B cell (primary cell): ENCODE measurements at regions of chr1 and their contacts with region 1.

Region 1: DNA sequence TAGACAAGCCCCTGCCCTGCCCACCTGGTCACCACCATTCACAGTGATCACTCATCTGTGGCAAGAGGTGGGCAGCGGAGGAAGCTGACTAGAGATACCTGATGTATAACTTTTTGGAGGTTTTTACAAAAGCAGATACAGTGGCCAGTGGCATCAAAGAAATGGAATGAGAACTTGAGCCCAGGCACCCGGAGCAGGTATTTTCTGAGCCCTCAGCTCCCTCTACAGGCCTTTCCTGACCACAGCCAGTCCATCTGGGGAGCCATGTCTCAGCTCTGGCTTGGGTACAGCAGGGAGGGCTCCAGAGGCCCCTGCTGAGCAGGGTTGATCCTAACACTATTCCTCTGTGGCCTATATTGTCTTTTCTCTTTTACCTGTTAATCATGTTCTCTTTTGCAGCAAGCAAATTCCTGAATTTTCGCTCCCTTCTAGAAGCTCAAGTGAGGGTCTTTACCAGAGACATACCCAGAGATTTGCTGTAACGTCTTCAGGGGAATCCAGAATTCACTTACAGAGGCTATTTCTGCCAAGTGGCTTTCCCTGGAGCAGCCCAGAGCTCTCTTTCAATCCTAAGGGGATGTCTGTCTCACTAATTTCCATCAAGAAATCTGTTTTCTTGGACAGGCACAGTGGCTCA is 27.3 kb downstream of the GPR157 start:
- DNase-seq: peak; percentile 72
- ATAC-seq: peak; percentile 93
- H3K4me3 ChIP-seq: no peak overlapping the region
- H3K4me3 Mint-ChIP-seq: no peak overlapping the region
- H3K27ac ChIP-seq: no peak overlapping the region
- H3K27ac Mint-ChIP-seq: no peak overlapping the region
- H3K4me1 ChIP-seq: no peaks in the 10 kb centered on the region
- H3K4me1 Mint-ChIP-seq: no peaks in the 10 kb centered on the region
- H3K27me3 ChIP-seq: no peaks in the 10 kb centered on the region
- H3K27me3 Mint-ChIP-seq: no peaks in the 10 kb centered on the region
- CTCF ChIP-seq: peak; percentile 78

Region 2: GRCh38 chr1:8913111-8913856 is 188.3 kb before region 1 on chr1:
- CTCF ChIA-PET with region 1: interaction called, 15 read pairs
- POLR2A ChIA-PET with region 1: no interaction called
- intact Hi-C with region 1: no loop called
- DNase-seq: no peak
- ATAC-seq: no peak
- H3K4me3 ChIP-seq: no peak overlapping the region
- H3K4me3 Mint-ChIP-seq: no peak overlapping the region
- H3K27ac ChIP-seq: no peak overlapping the region
- H3K27ac Mint-ChIP-seq: no peak overlapping the region
- H3K4me1 ChIP-seq: no peaks in the 10 kb centered on the region
- H3K4me1 Mint-ChIP-seq: no peaks in the 10 kb centered on the region
- H3K27me3 ChIP-seq: peaks cover 0 to 5% (median 0%) of the 10 kb centered on the region in 4 experiments
- H3K27me3 Mint-ChIP-seq: peaks cover 19% of the 10 kb centered on the region
- CTCF ChIP-seq: no peak

Region 3: DNA sequence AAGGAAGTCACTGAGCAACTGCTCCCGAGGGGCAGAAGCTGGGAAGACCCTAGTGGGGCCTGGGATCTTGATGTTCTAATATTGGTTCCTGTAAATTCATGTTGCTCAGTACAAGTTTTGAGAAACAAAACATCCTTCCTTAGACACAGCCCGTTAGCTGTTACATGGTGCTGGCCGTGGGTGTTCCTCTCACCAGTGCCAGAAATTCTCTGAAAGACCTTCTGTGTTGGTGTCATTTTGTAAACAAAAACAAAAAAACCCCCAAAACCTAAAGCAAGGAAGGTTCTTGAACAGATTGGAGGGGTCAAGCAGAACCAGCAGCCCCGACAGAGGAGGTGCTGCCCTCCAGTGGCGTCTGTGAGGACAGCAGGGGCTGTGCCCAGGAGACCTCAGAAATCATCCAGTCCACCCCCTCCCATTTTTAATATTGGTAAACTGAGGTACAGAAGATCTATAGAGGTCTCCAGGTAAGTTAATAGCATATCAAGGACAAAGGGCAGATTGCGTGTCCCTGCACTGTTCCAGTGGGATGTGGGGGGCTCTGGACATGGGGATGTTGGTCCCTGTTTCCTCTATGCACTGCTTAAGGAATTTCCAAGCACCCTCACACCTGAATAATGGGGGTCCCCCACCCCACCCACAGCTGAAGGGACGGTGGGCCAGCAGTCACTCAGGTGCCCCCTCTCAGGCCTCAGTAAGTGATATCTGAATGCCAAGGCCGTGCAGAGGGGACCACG is 113.6 kb before region 1 on chr1:
- CTCF ChIA-PET with region 1: interaction called, 15 read pairs
- POLR2A ChIA-PET with region 1: no interaction called
- intact Hi-C with region 1: loop called (anchors 2 kb)
- DNase-seq: peak; percentile 66
- ATAC-seq: peak; percentile 92
- H3K4me3 ChIP-seq: no peak overlapping the region
- H3K4me3 Mint-ChIP-seq: peak overlapping the region; percentile 15
- H3K27ac ChIP-seq: no peak overlapping the region
- H3K27ac Mint-ChIP-seq: no peak overlapping the region
- H3K4me1 ChIP-seq: peaks cover 5 to 15% of the 10 kb centered on the region in 2 donors
- H3K4me1 Mint-ChIP-seq: peaks cover 9% of the 10 kb centered on the region
- H3K27me3 ChIP-seq: peaks cover 0 to 4% (median 0%) of the 10 kb centered on the region in 4 experiments
- H3K27me3 Mint-ChIP-seq: peaks cover 19% of the 10 kb centered on the region
- CTCF ChIP-seq: peak; percentile 97

Region 4: GRCh38 chr1:9014475-9015375 is 86.9 kb before region 1 on chr1:
- CTCF ChIA-PET with region 1: interaction called, 95 read pairs
- POLR2A ChIA-PET with region 1: no interaction called
- intact Hi-C with region 1: loop called (anchors 1 kb)
- DNase-seq: no peak
- ATAC-seq: no peak
- H3K4me3 ChIP-seq: no peak overlapping the region
- H3K4me3 Mint-ChIP-seq: no peak overlapping the region
- H3K27ac ChIP-seq: no peak overlapping the region
- H3K27ac Mint-ChIP-seq: no peak overlapping the region
- H3K4me1 ChIP-seq: peaks cover 25 to 31% of the 10 kb centered on the region in 2 donors
- H3K4me1 Mint-ChIP-seq: peaks cover 34% of the 10 kb centered on the region
- H3K27me3 ChIP-seq: no peaks in the 10 kb centered on the region
- H3K27me3 Mint-ChIP-seq: peaks cover 6% of the 10 kb centered on the region
- CTCF ChIP-seq: no peak

Region 5: DNA sequence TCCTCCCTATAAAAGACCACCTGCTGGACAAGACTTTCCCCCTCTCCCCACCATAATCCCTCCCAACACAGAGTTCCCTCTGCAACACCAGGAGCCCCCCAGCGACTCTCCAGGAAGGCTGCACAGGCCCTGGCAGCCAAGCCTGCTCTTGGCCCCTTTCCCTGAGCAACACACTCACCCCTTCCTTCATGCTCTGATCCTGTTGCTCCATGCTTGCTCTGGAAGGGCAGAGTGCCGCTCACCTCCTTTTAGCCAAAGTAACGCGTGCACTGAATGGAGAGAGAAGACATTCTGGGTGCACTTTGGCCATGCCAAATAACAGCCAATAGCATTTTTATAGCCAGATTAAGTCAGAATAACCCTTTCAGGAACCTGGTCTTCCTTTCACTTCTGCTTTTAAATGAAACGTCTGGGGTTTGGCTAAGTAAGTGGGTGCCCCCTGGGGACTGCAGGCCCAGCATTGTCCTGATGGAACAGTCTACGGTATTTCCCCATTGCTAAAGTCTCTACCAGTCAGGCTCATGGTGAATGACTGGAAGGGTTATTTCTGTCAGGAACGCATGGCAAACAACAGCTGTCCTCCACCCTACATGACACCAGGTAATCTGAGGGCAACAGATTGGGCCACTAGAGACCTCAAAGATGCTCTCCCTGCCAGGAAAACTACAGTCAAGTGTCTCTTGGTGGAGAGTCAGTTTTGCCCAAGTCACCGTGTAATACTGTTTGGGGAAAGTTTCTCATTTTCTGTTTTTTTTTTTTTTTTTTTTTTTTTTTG is 32.1 kb before region 1 on chr1 and contains the start of gene SLC2A5:
- CTCF ChIA-PET with region 1: interaction called, 9 read pairs
- POLR2A ChIA-PET with region 1: no interaction called
- intact Hi-C with region 1: loop called (anchors 1 kb)
- DNase-seq: peak; percentile 89
- ATAC-seq: peak; percentile 98
- H3K4me3 ChIP-seq: peak within 1 kb of the TSS; percentile 22 to 70 (median 65)
- H3K4me3 Mint-ChIP-seq: peak within 1 kb of the TSS; percentile 95
- H3K27ac ChIP-seq: peak within 1 kb of the TSS; percentile 71 to 78
- H3K27ac Mint-ChIP-seq: peak within 1 kb of the TSS; percentile 84
- H3K4me1 ChIP-seq: peaks cover 49 to 58% of the 10 kb centered on the region in 2 donors
- H3K4me1 Mint-ChIP-seq: peaks cover 69% of the 10 kb centered on the region
- H3K27me3 ChIP-seq: no peaks in the 10 kb centered on the region
- H3K27me3 Mint-ChIP-seq: no peaks in the 10 kb centered on the region
- CTCF ChIP-seq: no peak
- total RNA-seq, gene SLC2A5: 28.8 and 29.5 TPM in 2 replicates

Region 6: DNA sequence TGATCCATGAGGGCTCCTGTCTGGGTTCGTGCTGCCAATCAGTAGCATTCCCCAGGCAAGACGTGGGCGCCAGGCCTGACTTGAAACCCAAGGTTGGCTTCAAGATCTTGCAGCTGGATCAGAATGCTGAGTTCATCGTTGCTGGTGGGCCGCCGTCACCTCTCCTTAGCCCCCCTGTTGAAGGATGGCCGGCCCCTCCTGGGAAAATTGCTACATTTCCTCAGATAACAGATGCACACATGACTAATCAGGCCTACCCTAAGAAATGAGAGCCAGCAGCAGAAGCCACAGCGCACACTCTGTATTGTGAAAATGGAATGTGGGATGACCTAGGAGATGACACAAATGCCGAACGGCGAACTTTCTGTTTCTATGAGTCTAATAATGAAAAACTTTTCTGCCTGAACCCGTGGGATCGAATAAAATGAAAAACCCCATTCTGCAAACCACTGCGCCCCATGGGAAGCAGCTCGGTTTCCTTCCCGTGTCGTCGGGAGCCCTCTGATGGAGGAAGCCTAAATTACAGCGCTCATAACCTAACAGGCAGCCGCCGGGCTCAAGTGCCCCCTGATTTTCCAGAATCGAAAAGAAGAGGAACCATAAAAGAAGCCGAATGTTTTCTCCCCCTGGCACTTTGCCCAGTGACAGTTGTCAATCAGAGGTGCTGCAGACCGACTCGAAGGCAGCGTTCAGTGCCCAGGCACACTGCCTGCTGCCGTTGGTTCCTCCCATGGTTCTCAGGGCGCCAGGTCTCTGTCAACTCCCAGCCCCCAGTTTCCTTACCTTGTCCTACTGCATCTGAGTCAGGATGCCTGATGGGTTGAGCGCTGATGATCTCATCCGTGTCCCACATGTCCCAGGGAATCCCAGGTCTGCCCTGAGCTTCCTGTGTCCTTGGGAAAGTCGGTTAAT is 94.8 kb after region 1 on chr1:
- CTCF ChIA-PET with region 1: interaction called, 11 read pairs
- POLR2A ChIA-PET with region 1: interaction called, 3 read pairs
- intact Hi-C with region 1: no loop called
- DNase-seq: peak; percentile 81
- ATAC-seq: peak; percentile 78
- H3K4me3 ChIP-seq: no peak overlapping the region
- H3K4me3 Mint-ChIP-seq: peak overlapping the region; percentile 16
- H3K27ac ChIP-seq: no peak overlapping the region
- H3K27ac Mint-ChIP-seq: no peak overlapping the region
- H3K4me1 ChIP-seq: peaks cover 7 to 13% of the 10 kb centered on the region in 2 donors
- H3K4me1 Mint-ChIP-seq: peaks cover 31% of the 10 kb centered on the region
- H3K27me3 ChIP-seq: peaks cover 0 to 38% (median 22%) of the 10 kb centered on the region in 4 experiments
- H3K27me3 Mint-ChIP-seq: peaks cover 32% of the 10 kb centered on the region
- CTCF ChIP-seq: peak; percentile 84

Region 7: GRCh38 chr1:9289090-9289534 is 187.5 kb after region 1 on chr1:
- CTCF ChIA-PET with region 1: no interaction called
- POLR2A ChIA-PET with region 1: no interaction called
- intact Hi-C with region 1: no loop called
- DNase-seq: peak; percentile 86
- ATAC-seq: no peak
- H3K4me3 ChIP-seq: no peak overlapping the region
- H3K4me3 Mint-ChIP-seq: no peak overlapping the region
- H3K27ac ChIP-seq: no peak overlapping the region
- H3K27ac Mint-ChIP-seq: no peak overlapping the region
- H3K4me1 ChIP-seq: peaks cover 5 to 16% of the 10 kb centered on the region in 2 donors
- H3K4me1 Mint-ChIP-seq: peaks cover 6% of the 10 kb centered on the region
- H3K27me3 ChIP-seq: no peaks in the 10 kb centered on the region
- H3K27me3 Mint-ChIP-seq: peaks cover 2% of the 10 kb centered on the region
- CTCF ChIP-seq: peak; percentile 96